CD4-positive, alpha-beta memory T cell (primary cell): ENCODE measurements at regions of chr2 and their contacts with region 1.

Region 1: GRCh38 chr2:105797298-105797819 is 52.6 kb downstream of the NCK2 start:
- DNase-seq: peak in 4 of 5 donors; percentile 53 to 67 (median 58)
- H3K4me3 ChIP-seq: peak overlapping the region; percentile 1 to 33
- H3K4me3 Mint-ChIP-seq: peak overlapping the region; percentile 74 to 88 (median 82)
- H3K27ac ChIP-seq: peak overlapping the region; percentile 74
- H3K27ac Mint-ChIP-seq: peak overlapping the region; percentile 86 to 98 (median 95)
- H3K4me1 ChIP-seq: peaks cover 99% of the 10 kb centered on the region
- H3K4me1 Mint-ChIP-seq: peaks cover 82 to 95% (median 88%) of the 10 kb centered on the region in 4 donors
- H3K27me3 ChIP-seq: no peaks in the 10 kb centered on the region
- H3K27me3 Mint-ChIP-seq: no peaks in the 10 kb centered on the region

Region 2: GRCh38 chr2:105403785-105404698 is 393.3 kb before region 1 on chr2:
- CTCF ChIA-PET with region 1: no interaction called
- POLR2A ChIA-PET with region 1: no interaction called
- intact Hi-C with region 1: no loop called
- DNase-seq: no peak
- H3K4me3 ChIP-seq: no peak overlapping the region
- H3K4me3 Mint-ChIP-seq: no peak overlapping the region
- H3K27ac ChIP-seq: no peak overlapping the region
- H3K27ac Mint-ChIP-seq: no peak overlapping the region
- H3K4me1 ChIP-seq: peaks cover 5% of the 10 kb centered on the region
- H3K4me1 Mint-ChIP-seq: peaks cover 0 to 5% (median 0%) of the 10 kb centered on the region in 4 donors
- H3K27me3 ChIP-seq: peaks cover 3% of the 10 kb centered on the region
- H3K27me3 Mint-ChIP-seq: peaks cover 21 to 32% of the 10 kb centered on the region in 2 donors

Region 3: GRCh38 chr2:105737980-105738657 is 59.2 kb before region 1 on chr2:
- CTCF ChIA-PET with region 1: no interaction called
- POLR2A ChIA-PET with region 1: interaction called, 9 read pairs
- intact Hi-C with region 1: loop called (anchors 2 kb)
- DNase-seq: peak in 4 of 5 donors; percentile 64 to 73 (median 68)
- H3K4me3 ChIP-seq: peak overlapping the region; percentile 1 to 7
- H3K4me3 Mint-ChIP-seq: peak overlapping the region; percentile 64 to 86 (median 80)
- H3K27ac ChIP-seq: peak overlapping the region; percentile 77
- H3K27ac Mint-ChIP-seq: peak overlapping the region; percentile 93 to 98 (median 97)
- H3K4me1 ChIP-seq: peaks cover 94% of the 10 kb centered on the region
- H3K4me1 Mint-ChIP-seq: peaks cover 65 to 92% (median 76%) of the 10 kb centered on the region in 4 donors
- H3K27me3 ChIP-seq: no peaks in the 10 kb centered on the region
- H3K27me3 Mint-ChIP-seq: no peaks in the 10 kb centered on the region

Region 4: DNA sequence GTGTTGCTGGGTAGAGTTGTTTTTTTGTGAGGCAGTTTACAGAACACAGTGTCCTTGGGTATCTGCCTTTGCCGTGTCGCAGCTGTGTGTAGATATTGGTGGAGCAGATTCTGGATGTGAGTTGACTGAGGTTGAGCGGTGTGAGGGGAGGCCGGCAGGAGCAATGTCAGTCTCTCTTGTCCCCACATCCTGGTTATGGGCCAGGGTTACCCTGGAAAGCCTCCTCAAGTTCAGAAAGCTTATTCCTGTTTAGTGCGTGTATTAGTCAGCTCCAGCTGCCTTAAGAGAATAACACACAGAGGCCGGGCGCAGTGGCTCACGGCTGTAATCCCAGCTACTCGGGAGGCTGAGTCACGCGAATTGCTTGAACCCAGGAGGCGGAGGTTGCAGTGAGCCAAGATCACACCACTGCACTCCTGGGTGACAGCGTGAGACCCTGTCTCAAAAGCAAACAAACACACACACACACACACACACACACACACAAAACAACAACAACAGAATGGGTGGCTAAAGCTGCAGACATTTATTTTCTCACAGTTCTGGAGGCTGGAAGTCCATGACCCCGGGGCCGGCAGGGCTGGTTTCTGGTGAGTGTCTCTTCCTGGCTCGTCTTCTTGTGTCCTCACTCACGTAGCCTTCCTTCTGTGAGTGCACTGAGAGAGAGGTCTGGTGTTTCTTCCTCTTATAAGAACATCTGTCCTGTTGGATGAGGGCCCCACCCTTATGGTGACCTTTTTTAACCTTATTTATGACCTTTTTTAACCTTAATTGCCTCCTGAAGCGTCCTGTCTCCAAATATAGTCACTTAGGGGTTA is 47.6 kb before region 1 on chr2:
- CTCF ChIA-PET with region 1: interaction called, 5 read pairs
- POLR2A ChIA-PET with region 1: interaction called, 47 read pairs
- intact Hi-C with region 1: loop called (anchors 2 kb)
- DNase-seq: peak in 3 of 5 donors; percentile 32 to 63 (median 37)
- H3K4me3 ChIP-seq: peak overlapping the region; percentile 21 to 48
- H3K4me3 Mint-ChIP-seq: peak overlapping the region; percentile 88 to 99 (median 92)
- H3K27ac ChIP-seq: peak overlapping the region; percentile 78
- H3K27ac Mint-ChIP-seq: peak overlapping the region; percentile 92 to 99 (median 97)
- H3K4me1 ChIP-seq: peaks cover 81% of the 10 kb centered on the region
- H3K4me1 Mint-ChIP-seq: peaks cover 60 to 93% (median 75%) of the 10 kb centered on the region in 4 donors
- H3K27me3 ChIP-seq: no peaks in the 10 kb centered on the region
- H3K27me3 Mint-ChIP-seq: no peaks in the 10 kb centered on the region

Region 5: GRCh38 chr2:105812180-105813044 is 15.1 kb after region 1 on chr2:
- CTCF ChIA-PET with region 1: interaction called, 8 read pairs
- POLR2A ChIA-PET with region 1: interaction called, 35 read pairs
- intact Hi-C with region 1: loop called (anchors 1 kb)
- DNase-seq: no peak
- H3K4me3 ChIP-seq: no peak overlapping the region
- H3K4me3 Mint-ChIP-seq: peak overlapping the region in 3 of 8 donors; percentile 37 to 61 (median 43)
- H3K27ac ChIP-seq: no peak overlapping the region
- H3K27ac Mint-ChIP-seq: peak overlapping the region in 6 of 7 donors; percentile 35 to 83 (median 68)
- H3K4me1 ChIP-seq: peaks cover 96% of the 10 kb centered on the region
- H3K4me1 Mint-ChIP-seq: peaks cover 65 to 98% (median 87%) of the 10 kb centered on the region in 4 donors
- H3K27me3 ChIP-seq: no peaks in the 10 kb centered on the region
- H3K27me3 Mint-ChIP-seq: no peaks in the 10 kb centered on the region

Region 6: GRCh38 chr2:105834931-105835330 is 37.6 kb after region 1 on chr2:
- CTCF ChIA-PET with region 1: interaction called, 5 read pairs
- POLR2A ChIA-PET with region 1: interaction called, 25 read pairs
- intact Hi-C with region 1: loop called (anchors 2 kb)
- DNase-seq: peak in 4 of 5 donors; percentile 56 to 67 (median 62)
- H3K4me3 ChIP-seq: no peak overlapping the region
- H3K4me3 Mint-ChIP-seq: peak overlapping the region in 7 of 8 donors; percentile 20 to 70 (median 39)
- H3K27ac ChIP-seq: no peak overlapping the region
- H3K27ac Mint-ChIP-seq: peak overlapping the region; percentile 48 to 90 (median 79)
- H3K4me1 ChIP-seq: peaks cover 81% of the 10 kb centered on the region
- H3K4me1 Mint-ChIP-seq: peaks cover 53 to 86% (median 71%) of the 10 kb centered on the region in 4 donors
- H3K27me3 ChIP-seq: no peaks in the 10 kb centered on the region
- H3K27me3 Mint-ChIP-seq: no peaks in the 10 kb centered on the region

Region 7: DNA sequence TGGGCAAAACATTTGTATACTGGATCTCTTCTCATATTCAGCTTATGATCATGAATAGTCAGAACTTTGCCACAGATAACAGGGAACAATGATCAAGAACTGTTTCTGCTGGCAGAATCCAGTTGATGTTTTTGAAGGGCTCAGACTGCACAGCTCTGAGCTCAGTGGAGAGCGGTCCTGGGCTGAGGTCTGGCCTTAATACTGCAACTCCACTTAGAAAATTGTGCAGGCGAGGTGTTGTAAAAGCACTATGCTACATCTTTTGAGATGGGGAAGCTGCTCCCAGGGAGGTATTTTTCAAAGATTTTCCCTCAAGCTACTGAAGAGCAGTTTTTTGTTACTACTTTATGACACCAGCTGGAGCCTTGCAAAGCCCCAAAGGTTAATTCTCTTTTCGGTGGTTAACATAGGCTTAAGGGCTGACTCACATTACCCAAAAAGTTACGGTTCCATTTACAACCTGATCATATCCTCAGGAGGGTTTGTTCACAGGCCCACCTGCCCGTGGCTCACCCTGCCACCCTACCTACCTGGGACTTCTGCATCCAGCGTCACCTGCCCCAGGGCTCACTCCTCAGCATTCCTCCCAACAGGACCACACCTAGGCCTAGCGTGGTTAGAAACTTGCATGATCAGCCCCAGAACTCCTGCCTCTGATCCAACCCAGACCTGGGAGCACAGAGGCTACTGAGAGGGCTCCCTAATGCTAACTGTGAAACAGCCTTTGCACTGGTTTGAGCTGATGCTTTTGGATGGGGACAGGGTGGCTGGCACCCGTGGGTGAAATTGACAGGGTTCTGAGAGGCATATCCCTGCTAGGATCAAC is 61.7 kb after region 1 on chr2:
- CTCF ChIA-PET with region 1: interaction called, 7 read pairs
- POLR2A ChIA-PET with region 1: interaction called, 34 read pairs
- intact Hi-C with region 1: loop called (anchors 1 kb)
- DNase-seq: peak in 1 of 5 donors; percentile 59
- H3K4me3 ChIP-seq: peak overlapping the region; percentile 6 to 20
- H3K4me3 Mint-ChIP-seq: peak overlapping the region in 7 of 8 donors; percentile 57 to 94 (median 81)
- H3K27ac ChIP-seq: peak overlapping the region; percentile 81
- H3K27ac Mint-ChIP-seq: peak overlapping the region; percentile 92 to 99 (median 95)
- H3K4me1 ChIP-seq: peaks cover 98% of the 10 kb centered on the region
- H3K4me1 Mint-ChIP-seq: peaks cover 76 to 94% (median 86%) of the 10 kb centered on the region in 4 donors
- H3K27me3 ChIP-seq: no peaks in the 10 kb centered on the region
- H3K27me3 Mint-ChIP-seq: no peaks in the 10 kb centered on the region

Region 8: DNA sequence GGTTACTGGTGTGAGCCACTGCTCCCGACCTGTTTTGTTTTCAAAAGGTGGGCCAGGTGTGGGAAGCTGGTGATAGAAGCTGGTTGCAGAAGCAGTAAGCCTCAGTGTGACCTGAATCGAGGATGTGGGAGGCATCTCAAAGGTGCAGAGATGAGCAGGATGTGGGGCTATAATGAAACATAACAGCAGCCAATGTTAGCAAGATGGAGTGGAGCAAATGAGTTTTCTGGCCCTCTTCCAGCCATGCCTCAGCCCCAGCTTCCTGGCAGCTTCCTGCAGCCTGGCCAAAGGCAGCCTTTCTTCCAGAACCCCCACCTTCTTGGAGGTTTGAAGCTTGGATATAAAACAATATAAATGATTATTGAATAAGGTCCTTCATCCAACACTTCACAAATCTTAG is 132.2 kb after region 1 on chr2:
- CTCF ChIA-PET with region 1: interaction called, 10 read pairs
- POLR2A ChIA-PET with region 1: interaction called, 14 read pairs
- intact Hi-C with region 1: loop called (anchors 5 kb)
- DNase-seq: peak; percentile 62 to 72 (median 68)
- H3K4me3 ChIP-seq: no peak overlapping the region
- H3K4me3 Mint-ChIP-seq: peak overlapping the region; percentile 33 to 81 (median 63)
- H3K27ac ChIP-seq: no peak overlapping the region
- H3K27ac Mint-ChIP-seq: peak overlapping the region; percentile 73 to 97 (median 90)
- H3K4me1 ChIP-seq: peaks cover 89% of the 10 kb centered on the region
- H3K4me1 Mint-ChIP-seq: peaks cover 50 to 66% (median 65%) of the 10 kb centered on the region in 4 donors
- H3K27me3 ChIP-seq: no peaks in the 10 kb centered on the region
- H3K27me3 Mint-ChIP-seq: no peaks in the 10 kb centered on the region